ENCODE measurements at regions of chr3 and their contacts with region 1.

Region 1: DNA sequence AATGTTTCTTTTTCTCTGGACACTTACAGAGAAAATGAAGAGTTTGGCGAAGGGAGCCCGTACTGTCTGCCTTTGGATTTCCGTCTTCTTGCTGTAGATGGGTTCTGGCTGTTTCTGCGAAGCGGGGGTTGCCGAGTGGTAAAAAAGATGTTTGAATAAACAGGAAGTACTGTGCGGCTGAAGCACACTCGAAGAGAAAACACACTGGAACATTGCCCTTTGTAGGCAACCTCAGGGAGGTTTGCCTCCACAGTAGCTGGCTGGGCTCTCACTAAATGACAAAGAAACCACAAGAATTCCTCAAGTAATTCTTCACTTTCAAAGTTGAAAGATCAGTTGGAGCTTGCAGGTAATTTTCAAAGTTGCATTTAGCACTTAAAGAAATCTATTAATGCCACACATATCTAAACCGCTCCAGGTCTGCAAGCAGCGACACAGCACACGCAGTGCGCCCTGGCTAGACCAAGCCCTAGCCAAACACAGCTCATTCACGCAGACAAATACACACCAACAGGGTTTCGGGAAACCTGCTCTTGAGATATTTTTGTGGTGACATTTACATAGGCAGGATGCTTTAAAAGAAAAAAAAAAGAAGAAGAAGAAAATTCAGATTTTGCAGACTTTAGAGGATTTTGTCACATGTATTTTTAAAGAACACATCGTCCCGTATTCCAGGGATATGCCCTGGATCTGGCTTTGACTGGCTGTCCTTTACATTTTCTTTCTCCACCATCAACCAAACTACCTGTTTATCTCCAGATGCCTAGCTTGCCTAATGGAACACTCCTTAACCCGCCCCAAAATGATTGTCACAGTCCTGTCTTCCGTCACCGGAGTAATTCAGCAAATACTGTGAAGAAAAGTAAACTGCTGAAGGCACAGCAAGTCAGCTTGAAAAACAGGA is 452.8 kb downstream of the FOXP1 start:
- DNase-seq: no peak

Region 2: GRCh38 chr3:71069797-71070196 is 60.9 kb before region 1 on chr3:
- intact Hi-C with region 1: loop called in 1 of 2 experiments (anchors 5 kb)
- DNase-seq: peak; percentile 89

Region 3: GRCh38 chr3:71247221-71247976 is 116.7 kb after region 1 on chr3:
- intact Hi-C with region 1: loop called in 1 of 2 experiments (anchors 10 kb)
- DNase-seq: no peak

Region 4: DNA sequence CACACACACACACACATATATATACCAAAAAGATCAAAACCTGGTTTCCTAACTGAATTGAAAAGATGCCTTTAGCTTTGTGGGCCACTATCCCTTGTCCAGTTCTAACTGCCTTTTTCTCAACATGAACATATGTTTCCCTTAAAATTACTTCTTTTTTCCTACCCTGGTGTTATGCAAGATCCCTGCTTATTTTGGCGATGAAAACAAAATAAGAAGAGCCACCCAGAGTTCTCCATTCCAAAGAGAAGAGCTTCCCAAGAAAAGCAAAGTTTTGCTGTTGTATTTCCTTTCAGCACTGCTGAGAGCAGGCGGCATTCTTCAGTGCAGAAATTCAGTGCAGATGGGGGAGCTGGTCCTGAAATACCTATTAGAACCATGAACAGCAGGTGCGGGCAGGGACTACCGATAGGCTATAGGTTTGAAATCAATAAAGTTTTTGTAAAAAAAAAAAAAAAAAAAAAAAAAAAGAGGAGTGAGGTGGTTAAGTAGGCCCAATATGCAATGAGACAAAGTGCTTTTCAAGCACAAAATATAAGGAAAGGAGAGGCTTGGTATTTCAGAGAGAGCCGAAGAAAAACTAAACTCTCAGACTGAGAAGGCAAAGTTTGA is 214.8 kb after region 1 on chr3:
- intact Hi-C with region 1: no loop called
- DNase-seq: no peak